CD14-positive monocyte (primary cell): ENCODE measurements at regions of chr17 and their contacts with region 1.

Region 1: GRCh38 chr17:28726226-28727130 is at the start of gene TLCD1:
- DNase-seq: peak; percentile 86 to 89 (median 89)
- H3K4me3 ChIP-seq: peak within 1 kb of the TSS; percentile 60 to 96 (median 66)
- H3K4me3 Mint-ChIP-seq: peak within 1 kb of the TSS; percentile 89 to 95
- H3K27ac ChIP-seq: peak within 1 kb of the TSS in 1 of 2 donors; percentile 20
- H3K27ac Mint-ChIP-seq: peak within 1 kb of the TSS in 6 of 7 donors; percentile 43 to 83 (median 64)
- H3K4me1 ChIP-seq: peaks cover 45 to 59% of the 10 kb centered on the region in 2 donors
- H3K4me1 Mint-ChIP-seq: peaks cover 53% of the 10 kb centered on the region
- H3K27me3 ChIP-seq: no peaks in the 10 kb centered on the region
- H3K27me3 Mint-ChIP-seq: peaks cover 2 to 15% (median 7%) of the 10 kb centered on the region in 3 donors
- CTCF ChIP-seq: peak; percentile 99
- polyA plus RNA-seq, gene TLCD1: 0.79 TPM in 1 of 3 donors, not detected in the others

Region 2: GRCh38 chr17:28644985-28645939 is 81.2 kb before region 1 on chr17 and contains the start of gene BLTP2:
- intact Hi-C with region 1: no loop called
- DNase-seq: peak; percentile 92 to 95 (median 93)
- H3K4me3 ChIP-seq: peak within 1 kb of the TSS; percentile 77 to 97 (median 89)
- H3K4me3 Mint-ChIP-seq: peak within 1 kb of the TSS; percentile 80 to 97
- H3K27ac ChIP-seq: peak within 1 kb of the TSS; percentile 83 to 96
- H3K27ac Mint-ChIP-seq: peak within 1 kb of the TSS; percentile 92 to 98 (median 96)
- H3K4me1 ChIP-seq: peaks cover 26 to 34% of the 10 kb centered on the region in 2 donors
- H3K4me1 Mint-ChIP-seq: peaks cover 31% of the 10 kb centered on the region
- H3K27me3 ChIP-seq: no peaks in the 10 kb centered on the region
- H3K27me3 Mint-ChIP-seq: peaks cover 0 to 4% (median 0%) of the 10 kb centered on the region in 3 donors
- CTCF ChIP-seq: no peak
- polyA plus RNA-seq, gene BLTP2: 46.8 to 69.2 (median 53.2) TPM

Region 3: DNA sequence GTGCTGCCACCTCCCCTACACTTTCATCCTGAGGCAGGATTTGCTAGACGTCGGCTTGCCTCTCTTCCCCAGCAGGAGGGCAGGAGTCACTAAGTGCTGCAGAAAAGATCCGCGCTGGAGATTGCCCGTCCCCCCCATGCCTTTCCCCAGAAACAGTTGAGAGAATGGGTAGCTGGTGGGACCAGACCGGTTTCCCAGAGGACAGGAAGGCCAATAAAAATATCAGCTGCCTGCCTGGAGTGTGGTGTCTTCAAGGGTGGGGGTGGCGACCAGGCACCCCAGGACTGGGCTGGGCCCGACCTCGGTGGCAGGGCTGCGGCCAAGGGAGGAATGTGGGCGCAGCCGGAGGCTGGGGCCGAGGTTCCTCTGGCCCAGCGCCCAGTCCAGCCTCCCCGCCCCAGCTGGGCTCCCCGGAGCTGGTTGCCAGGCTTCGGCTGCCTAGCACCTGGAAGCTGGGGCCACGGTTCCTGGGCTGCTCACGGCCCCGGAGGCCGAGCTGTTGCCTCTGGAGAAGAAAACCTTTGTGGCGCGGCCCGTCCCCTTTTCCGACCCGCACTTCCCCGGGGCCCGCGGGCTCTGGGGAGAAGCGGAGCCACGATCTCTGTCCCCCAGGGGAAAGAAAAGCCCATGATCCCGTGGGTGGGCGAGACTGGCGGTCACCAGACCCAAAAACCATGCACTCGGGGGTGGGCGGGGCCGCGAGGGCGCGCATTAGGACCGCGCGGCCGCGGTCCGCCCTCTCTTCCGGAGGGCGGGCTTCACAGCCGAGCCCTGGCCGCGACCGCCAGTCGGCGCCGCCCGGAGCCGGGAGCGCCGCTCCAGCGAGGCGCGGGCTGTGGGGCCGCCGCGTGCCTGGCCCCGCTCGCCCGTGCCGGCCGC is 17.0 kb after region 1 on chr17 and contains the start of gene TRAF4:
- intact Hi-C with region 1: loop called (anchors 1 to 2 kb)
- DNase-seq: peak; percentile 63 to 70 (median 68)
- H3K4me3 ChIP-seq: peak within 1 kb of the TSS; percentile 49 to 82 (median 69)
- H3K4me3 Mint-ChIP-seq: peak within 1 kb of the TSS; percentile 77 to 84
- H3K27ac ChIP-seq: peak within 1 kb of the TSS in 1 of 2 donors; percentile 58
- H3K27ac Mint-ChIP-seq: peak within 1 kb of the TSS in 5 of 7 donors; percentile 8 to 81 (median 69)
- H3K4me1 ChIP-seq: peaks cover 49 to 51% of the 10 kb centered on the region in 2 donors
- H3K4me1 Mint-ChIP-seq: peaks cover 35% of the 10 kb centered on the region
- H3K27me3 ChIP-seq: peaks cover 4 to 15% of the 10 kb centered on the region in 2 donors
- H3K27me3 Mint-ChIP-seq: peaks cover 8 to 34% (median 32%) of the 10 kb centered on the region in 3 donors
- CTCF ChIP-seq: peak; percentile 7
- polyA plus RNA-seq, gene TRAF4: 0.33 to 38.0 (median 1.0) TPM

Region 4: DNA sequence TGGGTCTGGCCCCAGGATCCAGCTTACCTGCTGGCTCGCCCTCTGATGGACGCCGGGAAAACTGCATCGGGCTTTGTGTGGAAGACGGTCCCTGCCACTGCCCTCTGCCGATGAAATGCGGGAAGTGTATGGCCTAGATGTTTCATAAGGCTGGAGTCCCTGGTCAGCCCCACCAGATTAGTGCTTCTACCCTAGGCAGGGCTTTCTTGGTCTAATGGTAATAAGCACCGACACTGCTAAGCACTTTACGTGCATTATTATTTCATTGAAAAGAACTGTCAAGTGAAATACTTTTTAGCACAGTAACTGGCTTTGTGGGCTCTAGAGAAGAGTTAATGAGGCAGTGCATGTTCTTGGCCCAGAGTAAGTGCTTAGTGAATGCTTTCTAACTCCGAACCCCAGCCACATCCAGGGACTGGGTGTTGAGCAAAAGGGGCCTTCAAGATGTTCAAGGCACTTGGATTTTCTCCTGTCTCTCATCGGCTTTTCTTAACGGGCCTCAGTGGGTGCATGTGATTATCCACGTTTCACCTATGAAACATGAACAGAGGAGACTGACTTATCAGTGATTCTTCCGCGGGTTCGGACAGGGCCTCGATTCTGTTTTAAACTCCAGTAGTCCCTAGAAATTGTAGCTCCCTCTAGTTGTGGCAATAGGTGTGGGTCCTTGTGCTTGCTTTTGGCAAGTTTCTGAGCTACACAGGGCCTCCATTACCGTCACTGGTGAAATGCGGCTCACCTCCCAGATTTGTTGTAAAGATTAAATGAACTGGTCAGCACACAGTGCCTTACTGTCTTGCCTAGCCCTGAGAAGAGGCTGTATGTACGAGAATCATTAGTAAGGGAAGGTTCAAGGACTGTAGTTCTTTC is 23.9 kb after region 1 on chr17:
- intact Hi-C with region 1: loop called (anchors 1 kb)
- DNase-seq: peak; percentile 84 to 91 (median 89)
- H3K4me3 ChIP-seq: no peak overlapping the region
- H3K4me3 Mint-ChIP-seq: no peak overlapping the region
- H3K27ac ChIP-seq: no peak overlapping the region
- H3K27ac Mint-ChIP-seq: no peak overlapping the region
- H3K4me1 ChIP-seq: peaks cover 3 to 5% of the 10 kb centered on the region in 2 donors
- H3K4me1 Mint-ChIP-seq: peaks cover 3% of the 10 kb centered on the region
- H3K27me3 ChIP-seq: peaks cover 0 to 3% of the 10 kb centered on the region in 2 donors
- H3K27me3 Mint-ChIP-seq: peaks cover 2 to 12% (median 12%) of the 10 kb centered on the region in 3 donors
- CTCF ChIP-seq: peak; percentile 99

Region 5: DNA sequence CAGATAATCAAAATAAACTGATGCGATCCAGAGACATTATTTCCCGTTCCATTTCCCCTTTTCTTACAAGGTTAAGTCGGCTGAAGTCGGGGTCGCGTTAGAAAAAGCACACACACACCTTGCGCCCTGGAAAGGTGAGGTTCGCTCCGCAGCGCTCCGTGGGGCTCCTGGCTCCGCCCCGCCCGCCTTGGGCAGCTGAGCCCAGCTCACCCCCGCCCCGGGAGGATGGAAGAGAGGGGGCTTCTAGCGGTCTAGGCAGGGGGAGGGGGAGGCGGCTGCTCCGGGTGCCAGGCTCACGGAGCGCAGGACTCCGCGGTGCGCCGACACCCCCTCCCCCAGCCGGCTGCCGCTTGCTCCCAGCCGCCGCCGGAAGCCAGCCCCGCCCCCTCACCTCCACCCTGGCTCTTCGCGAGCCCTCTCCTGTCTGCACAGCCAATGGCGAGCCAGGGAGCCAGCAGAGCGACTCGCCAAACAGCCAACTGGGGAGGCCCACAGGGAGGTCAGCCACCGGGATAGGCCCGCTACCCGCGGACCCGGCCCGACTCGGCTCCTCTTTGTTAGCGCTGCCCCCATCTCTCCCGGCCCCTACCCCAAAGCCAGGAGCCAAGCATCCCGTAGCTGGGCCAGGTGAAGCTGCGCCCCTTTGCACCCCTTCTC is 85.7 kb after region 1 on chr17:
- intact Hi-C with region 1: loop called in 1 of 2 experiments (anchors 5 kb)
- DNase-seq: peak; percentile 92 to 93 (median 92)
- H3K4me3 ChIP-seq: peak overlapping the region; percentile 89 to 96 (median 92)
- H3K4me3 Mint-ChIP-seq: peak overlapping the region; percentile 84 to 90
- H3K27ac ChIP-seq: peak overlapping the region; percentile 67 to 93
- H3K27ac Mint-ChIP-seq: peak overlapping the region; percentile 90 to 98 (median 97)
- H3K4me1 ChIP-seq: peaks cover 18% of the 10 kb centered on the region in 2 donors
- H3K4me1 Mint-ChIP-seq: peaks cover 26% of the 10 kb centered on the region
- H3K27me3 ChIP-seq: no peaks in the 10 kb centered on the region
- H3K27me3 Mint-ChIP-seq: no peaks in the 10 kb centered on the region
- CTCF ChIP-seq: no peak

Region 6: DNA sequence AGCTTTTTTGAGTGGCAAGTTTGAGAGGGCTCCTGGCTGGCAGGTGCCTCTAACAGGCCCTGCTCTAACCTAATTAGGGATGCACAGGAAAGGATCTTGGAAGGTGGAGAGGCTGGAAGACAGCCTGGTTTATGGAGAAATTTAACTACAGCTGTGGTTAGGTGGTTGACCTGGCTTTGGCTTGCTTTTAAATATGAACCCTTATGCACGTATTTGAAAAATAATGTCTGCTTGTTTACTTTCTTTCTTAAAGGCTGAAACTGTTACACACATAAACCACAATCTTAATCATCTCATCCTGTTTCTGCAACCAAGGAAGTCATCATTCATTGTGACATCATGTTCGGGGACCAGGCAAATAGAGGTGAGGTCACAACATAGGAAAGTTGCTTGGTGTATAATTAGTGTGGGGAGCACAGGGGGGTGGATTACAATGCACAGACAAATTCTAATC is 199.5 kb after region 1 on chr17:
- intact Hi-C with region 1: no loop called
- DNase-seq: peak; percentile 89 to 96 (median 90)
- H3K4me3 ChIP-seq: peak overlapping the region; percentile 10 to 55 (median 52)
- H3K4me3 Mint-ChIP-seq: peak overlapping the region; percentile 68 to 87
- H3K27ac ChIP-seq: peak overlapping the region; percentile 84 to 95
- H3K27ac Mint-ChIP-seq: peak overlapping the region; percentile 97 to 99 (median 99)
- H3K4me1 ChIP-seq: peaks cover 38 to 50% of the 10 kb centered on the region in 2 donors
- H3K4me1 Mint-ChIP-seq: peaks cover 54% of the 10 kb centered on the region
- H3K27me3 ChIP-seq: no peaks in the 10 kb centered on the region
- H3K27me3 Mint-ChIP-seq: no peaks in the 10 kb centered on the region
- CTCF ChIP-seq: no peak